ENCODE measurements at regions of chr1 and their contacts with region 1.

Region 1: GRCh38 chr1:24594154-24594553 is 38.3 kb downstream of the NCMAP start:
- DNase-seq: peak; percentile 37
- H3K4me3 Mint-ChIP-seq: no peak overlapping the region
- H3K27ac Mint-ChIP-seq: peak overlapping the region; percentile 64
- H3K4me1 Mint-ChIP-seq: peaks cover 19% of the 10 kb centered on the region
- H3K27me3 Mint-ChIP-seq: no peaks in the 10 kb centered on the region
- CTCF ChIP-seq: no peak

Region 2: DNA sequence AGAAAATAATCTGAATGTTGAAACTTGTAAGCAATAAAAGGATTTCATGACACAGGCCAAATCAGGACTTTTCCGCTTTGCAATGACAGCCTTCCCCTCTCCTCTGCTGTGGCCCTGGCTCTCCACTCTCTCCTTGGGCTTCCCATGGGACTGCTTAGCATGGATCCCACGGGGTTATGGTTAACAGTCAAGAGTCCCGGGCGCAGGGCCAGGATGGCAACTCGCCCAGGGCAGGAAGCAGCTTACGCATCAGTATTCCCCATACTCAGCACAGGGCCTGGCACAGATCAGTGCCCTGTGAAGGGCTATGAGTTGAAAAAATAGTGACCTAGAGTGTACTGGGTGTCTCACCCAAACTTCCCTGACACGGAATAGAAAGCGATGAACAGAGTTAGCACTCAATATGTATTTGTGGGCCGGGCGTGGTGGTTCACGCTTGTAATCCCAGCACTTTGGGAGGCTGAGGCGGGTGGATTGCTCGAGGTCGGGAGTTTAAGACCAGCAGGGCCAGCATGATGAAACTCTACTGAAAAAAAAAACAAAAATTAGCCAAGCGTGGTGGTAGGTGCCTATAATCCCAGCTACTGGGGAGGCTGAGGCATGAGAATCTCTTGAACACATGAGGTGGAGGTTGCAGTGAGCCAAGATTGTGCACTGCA is 304.1 kb before region 1 on chr1:
- CTCF ChIA-PET with region 1: no interaction called
- intact Hi-C with region 1: no loop called
- DNase-seq: peak; percentile 57
- H3K4me3 Mint-ChIP-seq: no peak overlapping the region
- H3K27ac Mint-ChIP-seq: no peak overlapping the region
- H3K4me1 Mint-ChIP-seq: peaks cover 19% of the 10 kb centered on the region
- H3K27me3 Mint-ChIP-seq: no peaks in the 10 kb centered on the region
- CTCF ChIP-seq: no peak

Region 3: DNA sequence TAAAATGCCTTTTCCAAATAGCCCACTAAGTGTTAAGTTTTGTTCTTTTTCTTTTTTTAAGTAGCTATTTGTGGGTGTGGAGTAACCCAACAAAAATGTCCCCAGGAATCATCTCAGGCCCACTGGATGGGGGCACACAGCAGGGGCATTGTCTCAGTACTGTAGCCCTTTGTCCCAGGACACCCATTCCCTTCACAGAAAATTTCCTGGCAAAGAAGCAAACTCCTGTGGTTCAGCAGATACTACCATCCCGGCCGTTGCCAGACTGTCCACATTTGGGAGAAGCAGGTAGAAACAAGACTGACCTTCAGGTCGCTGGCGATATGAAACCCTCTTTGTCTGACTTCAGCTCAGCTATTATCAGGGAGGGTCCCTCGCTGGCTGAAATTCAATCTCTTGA is 25.2 kb after region 1 on chr1:
- CTCF ChIA-PET with region 1: interaction called, 10 read pairs
- intact Hi-C with region 1: no loop called
- DNase-seq: no peak
- H3K4me3 Mint-ChIP-seq: no peak overlapping the region
- H3K27ac Mint-ChIP-seq: no peak overlapping the region
- H3K4me1 Mint-ChIP-seq: peaks cover 12% of the 10 kb centered on the region
- H3K27me3 Mint-ChIP-seq: no peaks in the 10 kb centered on the region
- CTCF ChIP-seq: no peak

Region 4: GRCh38 chr1:24754229-24754628 is 160.1 kb after region 1 on chr1:
- CTCF ChIA-PET with region 1: no interaction called
- intact Hi-C with region 1: no loop called
- DNase-seq: no peak
- H3K4me3 Mint-ChIP-seq: no peak overlapping the region
- H3K27ac Mint-ChIP-seq: no peak overlapping the region
- H3K4me1 Mint-ChIP-seq: peaks cover 7% of the 10 kb centered on the region
- H3K27me3 Mint-ChIP-seq: no peaks in the 10 kb centered on the region
- CTCF ChIP-seq: no peak

Measured in Calu3 (cell line).